Left ventricle myocardium inferior (tissue), 1 donor: ENCODE measurements at regions of chr10 and their contacts with region 1.

Region 1: DNA sequence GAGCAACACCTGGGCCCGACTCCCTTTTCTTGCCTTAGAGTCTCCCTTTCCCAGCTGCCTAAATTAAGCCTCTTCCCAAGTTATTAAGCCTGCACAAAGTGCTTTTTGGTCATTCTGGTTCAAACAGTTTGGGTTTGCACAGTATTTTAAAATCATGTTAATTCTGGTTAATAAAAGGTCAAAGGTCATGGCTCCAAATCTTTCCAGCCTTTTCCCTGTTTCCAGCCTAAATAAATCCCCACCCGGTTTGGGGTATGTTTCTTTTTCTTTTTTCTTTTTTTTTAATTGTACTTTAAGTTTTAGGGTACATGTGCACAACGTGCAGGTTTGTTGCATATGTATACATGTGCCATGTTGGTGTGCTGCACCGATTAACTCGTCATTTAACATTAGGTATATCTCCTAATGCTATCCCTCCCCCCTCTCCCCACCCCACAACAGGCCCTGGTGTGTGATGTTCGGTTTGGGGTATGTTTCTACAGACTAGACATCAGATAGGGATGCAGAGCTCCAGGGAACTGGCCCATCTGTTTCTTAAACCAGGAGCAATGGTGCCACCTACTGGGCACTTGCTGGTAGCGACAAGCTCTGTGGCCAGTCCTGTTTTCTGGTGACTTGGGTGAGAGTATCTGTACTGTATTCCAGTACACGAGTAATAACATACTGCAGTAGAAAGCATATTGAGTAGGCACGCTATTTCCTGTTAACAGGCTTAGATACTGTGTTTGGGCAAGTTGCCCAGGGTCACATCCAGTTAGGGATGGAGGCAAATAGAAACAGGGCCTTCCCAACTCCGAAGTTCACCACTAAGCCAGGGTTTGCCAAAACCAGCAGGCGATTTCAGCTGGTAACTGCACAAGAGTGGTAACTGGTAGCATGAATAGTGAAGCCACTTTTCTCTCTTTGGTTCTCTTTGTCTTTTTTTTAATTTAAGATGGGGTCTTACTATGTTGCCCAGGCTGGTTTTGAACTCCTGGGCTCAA is 60.6 kb upstream of the TRIM8 start:
- DNase-seq: peak; percentile 82
- H3K4me3 ChIP-seq: no peak overlapping the region
- H3K27ac ChIP-seq: no peak overlapping the region
- H3K4me1 ChIP-seq: peaks cover 25% of the 10 kb centered on the region
- H3K27me3 ChIP-seq: no peaks in the 10 kb centered on the region
- CTCF ChIP-seq: peak; percentile 91

Region 2: DNA sequence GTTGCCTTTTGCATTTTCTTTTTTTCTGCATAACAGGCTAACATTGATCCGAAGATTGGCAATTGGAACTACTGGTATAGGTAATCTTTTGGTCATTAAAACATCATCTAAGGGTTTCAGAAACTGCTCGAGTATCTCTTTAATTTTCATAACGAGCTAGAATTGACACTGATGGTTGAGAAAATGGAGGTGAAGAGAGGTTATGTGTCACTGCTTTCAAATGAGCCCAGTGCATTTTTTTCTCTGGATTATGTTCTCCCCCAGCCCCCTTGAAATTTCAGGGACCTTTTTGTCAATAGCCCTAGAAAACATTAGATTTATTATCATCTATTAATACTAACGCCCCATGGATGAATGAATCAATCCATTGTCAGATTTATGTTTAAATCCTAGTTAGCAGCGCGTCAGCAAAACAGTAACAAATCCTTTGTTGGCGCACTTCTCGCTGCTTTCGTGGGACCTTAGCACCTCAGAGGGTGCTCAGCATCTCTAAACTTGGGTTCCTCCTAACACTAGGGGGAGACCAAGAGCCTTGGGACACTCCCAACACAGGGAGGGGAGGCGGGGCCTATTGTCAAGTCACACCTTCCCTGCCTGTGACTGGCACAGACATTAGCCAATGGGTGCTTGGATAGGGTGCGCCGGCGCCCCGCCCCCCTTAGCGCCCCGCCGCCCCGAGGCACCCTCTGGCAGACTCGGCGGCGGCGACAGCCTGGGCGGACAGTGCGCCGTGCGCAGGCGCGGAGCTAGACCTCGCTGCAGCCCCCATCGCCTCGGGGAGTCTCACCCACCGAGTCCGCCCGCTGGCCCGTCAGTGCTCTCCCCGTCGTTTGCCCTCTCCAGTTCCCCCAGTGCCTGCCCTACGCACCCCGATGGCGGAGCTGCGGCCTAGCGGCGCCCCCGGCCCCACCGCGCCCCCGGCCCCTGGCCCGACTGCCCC is 80.2 kb before region 1 on chr10 and contains the start of gene SUFU:
- intact Hi-C with region 1: loop called (anchors 10 kb)
- DNase-seq: peak; percentile 97
- H3K4me3 ChIP-seq: peak within 1 kb of the TSS; percentile 93
- H3K27ac ChIP-seq: peak within 1 kb of the TSS; percentile 96
- H3K4me1 ChIP-seq: peaks cover 76% of the 10 kb centered on the region
- H3K27me3 ChIP-seq: no peaks in the 10 kb centered on the region
- CTCF ChIP-seq: peak; percentile 97
- total RNA-seq, gene SUFU: 7.9 TPM